H1 (cell line): ENCODE measurements at regions of chr4 and their contacts with region 1.

Region 1: GRCh38 chr4:186445040-186445439 is 110.3 kb downstream of the MTNR1A start:
- DNase-seq: no peak
- H3K4me3 ChIP-seq: no peak overlapping the region
- H3K27ac ChIP-seq: no peak overlapping the region
- H3K4me1 ChIP-seq: no peaks in the 10 kb centered on the region
- H3K27me3 ChIP-seq: peaks cover 0 to 1% (median 0%) of the 10 kb centered on the region in 4 experiments; a peak in 1 of 7 replicates
- CTCF ChIP-seq: no peak
- EP300 ChIP-seq: no peak
- POLR2A ChIP-seq: no peak
- RAD21 ChIP-seq: no peak

Region 2: DNA sequence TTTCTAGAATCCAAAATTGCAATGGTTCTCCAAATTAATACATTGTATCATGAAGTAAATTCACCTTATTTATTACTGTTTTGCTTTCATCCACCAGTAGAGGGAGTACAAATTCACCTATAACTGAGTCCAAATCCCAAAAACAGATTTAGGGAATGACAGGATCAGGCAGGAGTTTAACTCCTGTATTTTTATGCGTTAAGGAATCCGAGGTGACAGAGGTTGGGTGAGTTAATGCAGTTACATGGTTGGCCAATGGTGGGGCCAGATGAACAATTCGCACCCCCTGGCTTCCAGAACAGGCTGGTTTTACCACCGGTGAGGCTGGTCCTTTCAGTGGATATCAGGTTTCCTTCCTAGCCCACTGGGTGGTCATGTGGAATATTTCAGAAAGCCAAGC is 27.9 kb after region 1 on chr4:
- CTCF ChIA-PET with region 1: interaction called, 10 read pairs
- POLR2A ChIA-PET with region 1: no interaction called
- DNase-seq: no peak
- H3K4me3 ChIP-seq: peak overlapping the region in 1 of 4 experiments; percentile 2; a peak in 1 of 8 replicates
- H3K27ac ChIP-seq: no peak overlapping the region
- H3K4me1 ChIP-seq: peaks cover 0 to 6% (median under 1%) of the 10 kb centered on the region in 4 experiments; a peak in 1 of 7 replicates
- H3K27me3 ChIP-seq: no peaks in the 10 kb centered on the region
- CTCF ChIP-seq: peak; percentile 3 to 51 (median 15); a peak in 3 of 4 replicates
- EP300 ChIP-seq: no peak
- POLR2A ChIP-seq: no peak
- RAD21 ChIP-seq: peak; percentile 32 to 33